HepG2 (cell line): ENCODE measurements at regions of chr18 and their contacts with region 1.

Region 1: DNA sequence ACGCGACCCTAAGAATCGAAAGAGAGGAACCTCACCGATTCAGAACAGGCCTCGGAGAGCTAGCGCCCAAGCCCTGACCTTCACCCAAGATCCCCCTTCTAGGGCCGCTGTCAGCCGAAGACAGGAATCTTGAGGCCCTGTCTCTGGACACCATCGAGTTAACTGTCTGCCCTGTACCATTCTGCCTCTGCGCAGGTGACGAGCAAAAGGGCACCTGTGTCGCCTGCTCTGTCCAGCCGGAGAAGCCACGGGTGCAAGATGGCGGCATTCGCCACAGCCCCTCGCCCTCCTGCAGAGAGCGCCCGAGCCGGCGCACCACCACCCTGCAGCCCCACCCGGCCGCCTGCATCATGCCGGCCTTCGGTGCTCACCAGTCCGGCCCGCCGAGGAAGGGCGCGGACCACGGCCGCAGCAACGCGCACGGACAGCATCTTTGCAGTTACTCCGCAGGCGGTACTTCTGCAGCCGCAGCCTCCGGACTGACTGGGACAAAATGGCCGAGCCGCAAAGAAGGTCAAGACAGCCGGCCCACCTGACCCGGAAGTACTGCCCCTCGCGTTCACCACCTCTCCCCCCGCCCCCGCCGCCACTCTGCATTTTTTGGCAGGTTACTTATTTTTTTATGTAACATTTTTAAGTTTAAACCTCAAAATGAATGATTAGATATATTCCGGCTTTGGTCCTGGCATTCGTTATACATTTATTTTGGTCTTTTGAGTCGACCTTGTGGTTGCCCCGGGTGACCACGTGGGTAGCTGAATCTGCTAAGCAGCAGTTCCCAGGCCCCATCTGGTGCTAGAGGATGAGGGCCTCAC is at the start of gene ATP5F1A:
- DNase-seq: peak; percentile 77
- ATAC-seq: peak; percentile 96
- H3K4me3 ChIP-seq: peak within 1 kb of the TSS; percentile 91 to 98 (median 95)
- H3K27ac ChIP-seq: peak within 1 kb of the TSS; percentile 94
- H3K4me1 ChIP-seq: peaks cover 36% of the 10 kb centered on the region
- H3K27me3 ChIP-seq: no peaks in the 10 kb centered on the region; a peak in 1 of 5 replicates
- CTCF ChIP-seq: peak; percentile 43
- EP300 ChIP-seq: no peak
- POLR2A ChIP-seq: peak; percentile 91
- RAD21 ChIP-seq: peak; percentile 42
- total RNA-seq, gene ATP5F1A: 922 and 1,311 TPM in 2 replicates

Region 2: DNA sequence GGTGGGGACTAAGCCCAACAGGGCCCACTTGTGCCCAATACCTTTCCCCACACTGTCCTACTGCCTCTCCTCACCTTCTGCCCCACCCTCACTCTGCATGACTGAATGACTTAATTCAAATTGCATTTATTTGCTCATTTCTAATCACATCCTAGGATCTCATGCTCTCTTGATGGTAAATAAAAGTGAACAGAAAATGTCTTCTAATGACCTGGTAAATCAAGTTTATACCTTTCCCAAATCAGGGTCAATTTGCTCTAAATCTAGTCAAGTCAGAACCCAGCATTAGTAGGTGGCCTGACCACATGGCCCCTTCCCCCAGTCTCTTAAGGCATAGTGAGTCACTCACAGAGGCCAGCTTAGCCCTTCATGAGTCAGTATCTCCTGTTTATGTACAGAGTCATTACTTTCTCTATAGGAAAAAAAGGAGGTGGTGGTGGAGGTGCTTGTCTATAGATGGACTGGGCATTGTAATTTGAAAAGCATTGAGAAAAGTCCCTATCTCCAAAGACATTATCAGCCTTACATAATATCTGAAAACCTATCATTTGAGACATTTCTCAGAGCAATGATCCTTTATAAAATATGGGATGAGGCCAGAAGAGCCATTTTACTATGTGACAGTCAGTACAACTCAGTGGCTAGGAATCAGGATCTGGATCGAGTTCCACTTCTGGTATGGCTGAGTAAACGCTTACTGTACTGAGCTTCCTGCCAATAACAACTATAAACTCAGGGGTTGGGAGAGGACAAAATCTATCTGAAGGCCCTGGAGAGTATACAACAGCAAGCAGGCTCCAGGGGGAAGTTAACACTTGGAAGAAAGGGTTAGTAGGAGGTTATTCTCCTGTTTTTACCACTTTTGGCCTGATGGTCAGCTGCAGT is 295.2 kb before region 1 on chr18:
- CTCF ChIA-PET with region 1: no interaction called
- POLR2A ChIA-PET with region 1: no interaction called
- in situ Hi-C with region 1: no loop called
- intact Hi-C with region 1: no loop called
- DNase-seq: no peak
- ATAC-seq: no peak
- H3K4me3 ChIP-seq: no peak overlapping the region
- H3K27ac ChIP-seq: no peak overlapping the region
- H3K4me1 ChIP-seq: no peaks in the 10 kb centered on the region
- H3K27me3 ChIP-seq: no peaks in the 10 kb centered on the region
- CTCF ChIP-seq: no peak
- EP300 ChIP-seq: no peak
- POLR2A ChIP-seq: no peak
- RAD21 ChIP-seq: no peak

Region 3: DNA sequence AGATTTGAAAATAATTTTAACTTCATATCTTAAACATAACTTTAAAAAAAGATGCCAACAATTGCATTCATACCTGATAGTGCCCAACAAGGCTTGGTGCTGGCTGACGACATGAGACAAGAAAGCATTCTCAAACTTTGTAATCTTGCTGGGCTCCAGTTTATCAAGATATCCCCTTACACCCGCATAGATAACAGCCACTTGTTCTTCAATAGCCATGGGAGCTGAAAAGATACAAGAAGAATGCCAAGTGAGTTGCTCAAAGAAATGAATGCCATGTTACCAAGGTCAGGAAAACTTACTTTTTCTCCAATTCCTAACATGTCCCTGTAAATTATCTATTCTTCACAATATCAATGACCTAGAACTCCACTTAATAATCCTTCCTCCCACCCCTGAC is 13.6 kb before region 1 on chr18:
- CTCF ChIA-PET with region 1: no interaction called
- POLR2A ChIA-PET with region 1: interaction called, 15 read pairs
- in situ Hi-C with region 1: no loop called
- intact Hi-C with region 1: no loop called
- DNase-seq: no peak
- ATAC-seq: no peak
- H3K4me3 ChIP-seq: no peak overlapping the region
- H3K27ac ChIP-seq: no peak overlapping the region
- H3K4me1 ChIP-seq: 0 out of 2 replicates have a peak, but pooled peaks cover 2% of the 10 kb centered on the region
- H3K27me3 ChIP-seq: no peaks in the 10 kb centered on the region
- CTCF ChIP-seq: no peak
- EP300 ChIP-seq: no peak
- POLR2A ChIP-seq: no peak
- RAD21 ChIP-seq: no peak